ENCODE measurements at regions of chr2 and their contacts with region 1.

Region 1: GRCh38 chr2:237929979-237930378 is 36.8 kb upstream of the UBE2F start:
- DNase-seq: no peak
- ATAC-seq: no peak
- H3K4me3 ChIP-seq: no peak overlapping the region
- H3K4me3 Mint-ChIP-seq: no peak overlapping the region
- H3K27ac ChIP-seq: no peak overlapping the region
- H3K27ac Mint-ChIP-seq: peak overlapping the region in 1 of 9 donors; percentile 65
- H3K4me1 ChIP-seq: no peaks in the 10 kb centered on the region
- H3K4me1 Mint-ChIP-seq: peaks cover 0 to 15% (median 11%) of the 10 kb centered on the region in 7 donors
- H3K27me3 ChIP-seq: no peaks in the 10 kb centered on the region
- H3K27me3 Mint-ChIP-seq: no peaks in the 10 kb centered on the region

Region 2: GRCh38 chr2:237943395-237944094 is 13.6 kb after region 1 on chr2:
- CTCF ChIA-PET with region 1: interaction called, 17 read pairs
- POLR2A ChIA-PET with region 1: interaction called, 14 read pairs
- intact Hi-C with region 1: no loop called
- DNase-seq: no peak
- ATAC-seq: no peak
- H3K4me3 ChIP-seq: no peak overlapping the region
- H3K4me3 Mint-ChIP-seq: peak overlapping the region in 8 of 10 donors; percentile 25 to 89 (median 62)
- H3K27ac ChIP-seq: peak overlapping the region; percentile 26
- H3K27ac Mint-ChIP-seq: peak overlapping the region; percentile 87 to 99 (median 97)
- H3K4me1 ChIP-seq: peaks cover 34 to 40% of the 10 kb centered on the region in 2 donors
- H3K4me1 Mint-ChIP-seq: peaks cover 37 to 90% (median 75%) of the 10 kb centered on the region in 7 donors
- H3K27me3 ChIP-seq: no peaks in the 10 kb centered on the region
- H3K27me3 Mint-ChIP-seq: no peaks in the 10 kb centered on the region

Measured in naive thymus-derived CD4-positive, alpha-beta T cell (primary cell).